ENCODE measurements at regions of chr7 and their contacts with region 1.

Region 1: GRCh38 chr7:132318352-132319318 is 257.6 kb downstream of the PLXNA4 start:
- DNase-seq: peak; percentile 81 to 84
- ATAC-seq: peak; percentile 84 to 93 (median 90)
- H3K4me3 ChIP-seq: no peak overlapping the region
- H3K27ac ChIP-seq: no peak overlapping the region
- H3K4me1 ChIP-seq: peaks cover 0 to 14% (median 9%) of the 10 kb centered on the region in 9 donors
- H3K27me3 ChIP-seq: peaks cover 0 to 12% (median 0%) of the 10 kb centered on the region in 7 donors
- CTCF ChIP-seq: peak; percentile 84 to 94 (median 90)

Region 2: GRCh38 chr7:132206594-132206993 is 112.0 kb before region 1 on chr7:
- intact Hi-C with region 1: no loop called
- DNase-seq: peak in 1 of 2 donors; percentile 17
- ATAC-seq: peak; percentile 21 to 82 (median 50)
- H3K4me3 ChIP-seq: no peak overlapping the region
- H3K27ac ChIP-seq: peak overlapping the region in 8 of 10 donors; percentile 57 to 86 (median 78)
- H3K4me1 ChIP-seq: peaks cover 3 to 42% (median 13%) of the 10 kb centered on the region in 9 donors
- H3K27me3 ChIP-seq: no peaks in the 10 kb centered on the region
- CTCF ChIP-seq: no peak

Region 3: DNA sequence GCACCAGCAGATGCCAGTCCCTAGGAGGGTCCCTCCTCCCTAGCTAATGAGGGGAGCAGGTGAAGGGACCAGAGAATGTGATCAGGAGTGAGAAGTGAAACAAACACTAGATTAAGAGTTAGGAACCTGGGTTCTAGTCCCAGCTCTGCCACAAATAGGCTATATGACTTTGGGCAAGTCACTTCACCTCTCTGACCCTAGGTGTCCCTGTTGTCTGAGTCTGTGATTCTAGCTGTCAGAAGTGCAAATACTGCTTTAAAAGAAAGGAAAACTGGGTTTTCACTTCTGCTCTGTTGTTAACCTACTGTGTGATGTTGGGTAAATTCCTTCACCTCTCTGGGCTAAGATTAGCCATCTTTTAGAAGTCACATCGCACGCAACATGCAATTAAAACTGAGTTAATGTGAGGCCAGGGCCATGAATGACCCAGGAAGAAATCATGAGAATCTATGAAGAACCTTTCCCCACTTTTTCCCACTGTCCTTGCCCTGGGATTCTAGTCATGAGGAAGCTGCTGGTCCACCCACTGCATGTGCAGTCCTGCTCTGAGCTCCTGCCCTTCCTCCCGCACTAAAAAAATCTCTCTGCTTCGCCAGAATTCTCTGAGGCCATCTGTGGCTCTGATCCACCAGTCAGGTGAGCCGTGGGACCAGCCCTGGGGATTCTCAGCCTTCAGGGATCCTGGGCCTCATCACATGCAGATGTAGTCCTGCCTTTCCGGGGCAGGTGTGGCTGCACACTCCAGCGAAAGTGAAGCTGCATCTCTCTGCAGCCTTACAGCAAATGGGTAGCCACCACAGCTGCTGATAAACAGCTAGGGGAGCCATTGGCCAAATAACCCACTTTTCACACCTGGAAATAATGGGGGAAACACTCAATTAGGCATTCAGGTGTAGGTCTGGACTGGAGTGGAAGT is 75.9 kb after region 1 on chr7:
- intact Hi-C with region 1: loop called in 2 of 10 experiments (anchors 10 kb)
- DNase-seq: no peak
- ATAC-seq: peak in 6 of 8 donors; percentile 18 to 46 (median 24)
- H3K4me3 ChIP-seq: no peak overlapping the region
- H3K27ac ChIP-seq: peak overlapping the region in 1 of 10 donors; percentile 17
- H3K4me1 ChIP-seq: peaks cover 4 to 48% (median 27%) of the 10 kb centered on the region in 9 donors
- H3K27me3 ChIP-seq: no peaks in the 10 kb centered on the region
- CTCF ChIP-seq: peak in 6 of 9 donors; percentile 37 to 55 (median 49)

Region 4: DNA sequence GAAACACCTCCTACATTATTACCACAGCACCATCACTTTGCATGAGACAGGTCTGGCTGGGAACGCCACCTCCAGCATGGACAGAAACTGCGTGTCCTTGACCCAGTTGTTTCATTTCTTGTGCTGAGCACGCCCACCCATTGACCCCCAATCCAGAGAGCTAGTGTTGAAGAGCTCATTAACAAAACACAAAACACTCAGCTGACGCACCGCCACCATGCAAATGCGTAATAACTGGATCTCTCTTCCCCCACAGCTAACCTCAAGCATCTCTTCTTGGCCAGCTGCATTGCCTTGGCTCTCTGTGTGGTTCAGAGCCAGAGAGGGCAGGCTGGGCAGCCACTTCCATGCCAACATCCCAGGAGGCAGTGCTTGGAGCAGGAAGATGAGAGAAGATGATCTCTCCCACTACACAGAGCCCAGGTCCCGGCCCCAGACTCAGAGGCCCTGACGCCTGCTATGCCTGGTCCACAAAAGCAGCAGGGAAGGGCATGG is 84.2 kb after region 1 on chr7:
- intact Hi-C with region 1: loop called in 4 of 10 experiments (anchors 5 to 10 kb)
- DNase-seq: peak; percentile 32 to 42
- ATAC-seq: peak; percentile 44 to 89 (median 72)
- H3K4me3 ChIP-seq: peak overlapping the region in 1 of 10 donors; percentile 1
- H3K27ac ChIP-seq: peak overlapping the region in 8 of 10 donors; percentile 56 to 75 (median 62)
- H3K4me1 ChIP-seq: peaks cover 6 to 64% (median 36%) of the 10 kb centered on the region in 9 donors
- H3K27me3 ChIP-seq: no peaks in the 10 kb centered on the region
- CTCF ChIP-seq: no peak

Region 5: GRCh38 chr7:132500727-132501440 is 182.2 kb after region 1 on chr7:
- intact Hi-C with region 1: loop called (anchors 2 to 10 kb)
- DNase-seq: peak; percentile 55 to 77
- ATAC-seq: peak; percentile 72 to 90 (median 84)
- H3K4me3 ChIP-seq: no peak overlapping the region
- H3K27ac ChIP-seq: peak overlapping the region in 2 of 10 donors; percentile 4 to 16
- H3K4me1 ChIP-seq: peaks cover 6 to 32% (median 17%) of the 10 kb centered on the region in 9 donors
- H3K27me3 ChIP-seq: no peaks in the 10 kb centered on the region
- CTCF ChIP-seq: peak in 8 of 9 donors; percentile 40 to 69 (median 52)

Region 6: DNA sequence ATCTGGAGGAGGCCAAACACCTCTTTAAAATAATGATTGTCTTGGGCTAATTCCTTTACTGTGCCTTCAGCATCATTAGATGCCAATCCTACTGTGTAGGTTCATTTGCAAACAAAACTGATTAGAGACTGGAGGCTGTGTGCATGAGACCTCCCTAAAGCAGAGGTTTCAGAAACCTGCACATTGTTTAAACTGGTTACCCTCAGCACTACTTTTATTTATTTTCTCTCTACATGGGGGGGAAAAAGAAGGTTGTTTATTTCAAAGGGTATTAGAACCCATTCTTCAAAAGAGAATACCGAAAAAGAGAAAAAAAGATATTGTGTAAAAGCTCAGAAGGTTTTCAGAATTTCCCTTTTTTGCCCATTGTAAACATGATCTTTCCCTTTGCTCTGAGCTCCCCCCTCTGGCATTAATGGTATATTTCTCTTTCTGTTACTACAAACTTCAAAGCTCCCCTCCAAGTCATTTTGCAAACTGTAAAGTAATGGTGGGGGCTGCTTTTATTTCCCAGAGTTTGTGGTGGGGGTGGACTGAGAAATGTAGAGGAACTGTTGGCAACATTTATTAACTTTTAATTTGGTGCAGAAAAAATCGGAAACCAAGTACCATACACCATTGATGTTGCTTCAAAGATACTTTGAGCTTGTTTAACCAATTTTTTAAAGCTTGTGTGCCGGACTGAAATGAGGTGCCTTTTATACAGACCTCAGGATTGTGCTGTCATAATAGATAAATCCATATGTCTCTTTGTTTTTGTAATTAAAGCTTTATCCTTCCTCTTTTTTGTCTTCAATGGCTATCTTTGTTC is 1115.6 kb after region 1 on chr7:
- intact Hi-C with region 1: loop called in 1 of 10 experiments (anchors 5 kb)
- DNase-seq: no peak
- ATAC-seq: peak in 1 of 8 donors; percentile 35
- H3K4me3 ChIP-seq: no peak overlapping the region
- H3K27ac ChIP-seq: no peak overlapping the region
- H3K4me1 ChIP-seq: peaks cover 0 to 28% (median 19%) of the 10 kb centered on the region in 9 donors
- H3K27me3 ChIP-seq: no peaks in the 10 kb centered on the region
- CTCF ChIP-seq: peak in 8 of 9 donors; percentile 20 to 62 (median 52)

Measured in heart right ventricle (tissue), 16 donors.